ENCODE measurements at regions of chr19 and their contacts with region 1.

Region 1: GRCh38 chr19:5463959-5464358 is 8.7 kb downstream of the ZNRF4 start:
- DNase-seq: no peak
- ATAC-seq: no peak
- H3K4me3 ChIP-seq: no peak overlapping the region
- H3K27ac ChIP-seq: no peak overlapping the region
- H3K4me1 ChIP-seq: peaks cover 0 to 12% (median 4%) of the 10 kb centered on the region in 9 donors
- H3K27me3 ChIP-seq: peaks cover 0 to 13% (median 0%) of the 10 kb centered on the region in 7 donors
- CTCF ChIP-seq: no peak

Region 2: GRCh38 chr19:5392486-5392885 is 71.5 kb before region 1 on chr19:
- intact Hi-C with region 1: loop called in 1 of 10 experiments (anchors 2 kb)
- DNase-seq: no peak
- ATAC-seq: no peak
- H3K4me3 ChIP-seq: no peak overlapping the region
- H3K27ac ChIP-seq: no peak overlapping the region
- H3K4me1 ChIP-seq: peaks cover 0 to 4% (median 0%) of the 10 kb centered on the region in 9 donors
- H3K27me3 ChIP-seq: peaks cover 6 to 87% (median 69%) of the 10 kb centered on the region in 7 donors
- CTCF ChIP-seq: no peak

Region 3: GRCh38 chr19:5407356-5407755 is 56.6 kb before region 1 on chr19:
- intact Hi-C with region 1: no loop called
- DNase-seq: no peak
- ATAC-seq: no peak
- H3K4me3 ChIP-seq: no peak overlapping the region
- H3K27ac ChIP-seq: no peak overlapping the region
- H3K4me1 ChIP-seq: no peaks in the 10 kb centered on the region
- H3K27me3 ChIP-seq: peaks cover 0 to 22% (median 7%) of the 10 kb centered on the region in 7 donors
- CTCF ChIP-seq: no peak